ENCODE measurements at regions of chr19 and their contacts with region 1.

Region 1: DNA sequence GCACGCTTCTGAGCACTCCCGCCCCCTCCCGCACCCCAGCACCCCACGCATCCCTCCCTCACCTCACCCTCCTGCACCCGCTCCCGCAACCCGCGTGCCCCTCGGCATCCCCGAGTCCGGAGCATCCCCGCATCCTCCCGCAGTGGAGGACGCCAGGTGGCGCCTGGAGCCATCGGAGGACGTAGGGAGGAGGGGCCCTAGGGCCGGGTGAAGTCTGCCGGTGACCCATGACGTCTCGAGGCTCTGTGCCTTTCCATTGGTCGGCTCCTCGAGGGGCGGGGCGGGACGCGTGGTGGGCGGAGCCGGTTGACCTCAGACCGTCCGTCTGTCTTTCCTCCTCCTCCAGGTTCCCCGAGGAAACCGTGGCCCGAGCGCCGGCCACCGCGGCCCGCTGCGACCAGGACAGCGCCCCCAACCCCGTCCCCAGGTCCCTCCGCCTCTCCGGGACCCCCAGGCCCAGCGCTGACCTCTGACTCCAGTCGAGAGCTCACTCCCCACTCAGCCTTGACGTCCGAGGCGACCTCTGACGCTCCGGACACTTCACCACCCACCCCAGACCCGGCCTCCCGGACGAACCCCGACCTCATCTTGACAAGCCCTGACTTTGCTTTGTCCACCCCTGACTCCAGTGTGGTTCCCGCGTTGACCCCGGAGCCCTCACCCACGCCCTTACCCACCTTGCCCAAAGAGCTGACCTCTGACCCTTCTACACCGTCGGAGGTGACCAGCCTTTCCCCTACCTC is 19.9 kb downstream of the SBK2 start:
- DNase-seq: peak; percentile 94 to 98 (median 97)
- ATAC-seq: peak; percentile 98
- H3K4me3 ChIP-seq: peak overlapping the region; percentile 42
- H3K27ac ChIP-seq: peak overlapping the region; percentile 86
- H3K4me1 ChIP-seq: peaks cover 8% of the 10 kb centered on the region
- H3K27me3 ChIP-seq: no peaks in the 10 kb centered on the region

Region 2: DNA sequence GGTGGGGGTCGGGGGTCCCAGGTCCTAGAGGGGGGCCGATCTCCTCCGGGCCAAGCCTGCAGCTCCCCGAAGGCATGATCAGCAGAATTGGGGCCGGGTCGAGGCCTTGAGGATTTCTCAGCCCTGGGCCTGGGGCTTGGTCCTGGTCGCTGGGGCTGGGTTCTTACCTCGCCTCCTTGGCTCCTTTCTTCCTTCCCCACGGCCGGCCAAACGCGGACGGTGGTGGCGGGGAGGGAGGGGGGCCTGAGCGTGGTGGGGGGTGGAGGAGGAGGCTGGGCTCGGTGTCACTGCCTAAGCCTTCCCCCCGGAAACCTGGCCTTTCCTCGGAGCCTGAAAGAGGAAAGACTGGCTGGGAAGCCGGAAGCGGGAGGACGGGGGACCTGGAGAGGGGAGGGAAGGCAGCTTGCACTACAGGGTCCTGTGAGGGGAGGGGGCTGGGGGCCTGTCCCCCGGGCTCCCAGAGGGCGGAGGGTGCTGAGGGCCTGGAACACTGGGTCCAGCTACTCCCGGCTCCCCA is 63.6 kb after region 1 on chr19 and contains the start of gene ZNF579:
- intact Hi-C with region 1: loop called in 1 of 4 experiments (anchors 5 kb)
- DNase-seq: peak; percentile 89 to 95 (median 94)
- ATAC-seq: peak; percentile 84 to 85
- H3K4me3 ChIP-seq: peak within 1 kb of the TSS; percentile 87
- H3K27ac ChIP-seq: peak within 1 kb of the TSS; percentile 78
- H3K4me1 ChIP-seq: peaks cover 5% of the 10 kb centered on the region
- H3K27me3 ChIP-seq: no peaks in the 10 kb centered on the region
- total RNA-seq, gene ZNF579: 12.4 to 15.5 (median 14.2) TPM

Region 3: GRCh38 chr19:55599468-55600279 is 82.6 kb after region 1 on chr19 and contains the start of gene FIZ1:
- intact Hi-C with region 1: loop called in 2 of 4 experiments (anchors 10 kb)
- DNase-seq: peak; percentile 98 to 99 (median 99)
- ATAC-seq: peak; percentile 93 to 94
- H3K4me3 ChIP-seq: peak within 1 kb of the TSS; percentile 71
- H3K27ac ChIP-seq: peak within 1 kb of the TSS; percentile 99
- H3K4me1 ChIP-seq: no peaks in the 10 kb centered on the region
- H3K27me3 ChIP-seq: no peaks in the 10 kb centered on the region
- total RNA-seq, gene FIZ1: 17.5 to 20.0 (median 18.4) TPM

Region 4: DNA sequence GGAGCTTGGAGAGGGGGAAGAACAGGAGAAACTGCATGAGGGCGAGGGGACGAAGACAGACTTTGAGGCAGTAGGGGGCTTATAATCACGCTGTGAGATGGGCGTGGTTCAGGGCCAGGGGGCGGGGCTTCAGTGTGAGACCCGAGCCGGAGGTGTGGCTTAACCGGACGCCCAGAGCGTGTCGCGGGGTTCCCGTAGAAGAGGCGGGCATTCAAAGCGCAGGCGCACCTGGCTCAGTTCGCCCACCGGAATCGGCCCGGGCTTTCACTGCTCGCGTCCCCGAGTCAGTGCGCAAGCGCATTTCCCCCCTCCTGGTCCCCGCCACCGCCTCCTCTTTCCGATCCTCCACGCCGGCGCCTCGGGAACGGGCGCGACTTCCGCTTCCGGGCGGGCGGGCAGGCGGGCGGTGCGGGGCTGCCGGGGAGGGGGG is 88.2 kb after region 1 on chr19:
- intact Hi-C with region 1: loop called in 3 of 4 experiments (anchors 5 to 10 kb)
- DNase-seq: peak; percentile 98 to 99 (median 99)
- ATAC-seq: peak; percentile 84 to 85
- H3K4me3 ChIP-seq: peak overlapping the region; percentile 75
- H3K27ac ChIP-seq: peak overlapping the region; percentile 98
- H3K4me1 ChIP-seq: peaks cover 3% of the 10 kb centered on the region
- H3K27me3 ChIP-seq: no peaks in the 10 kb centered on the region

Region 5: GRCh38 chr19:55632463-55632834 is 115.4 kb after region 1 on chr19:
- intact Hi-C with region 1: loop called in 2 of 4 experiments (anchors 10 kb)
- DNase-seq: peak; percentile 66 to 79 (median 78)
- ATAC-seq: peak; percentile 27 to 58
- H3K4me3 ChIP-seq: no peak overlapping the region
- H3K27ac ChIP-seq: peak overlapping the region; percentile 63
- H3K4me1 ChIP-seq: peaks cover 12% of the 10 kb centered on the region
- H3K27me3 ChIP-seq: no peaks in the 10 kb centered on the region